Astrocyte of the cerebellum (primary cell): ENCODE measurements at regions of chr12 and their contacts with region 1.

Region 1: DNA sequence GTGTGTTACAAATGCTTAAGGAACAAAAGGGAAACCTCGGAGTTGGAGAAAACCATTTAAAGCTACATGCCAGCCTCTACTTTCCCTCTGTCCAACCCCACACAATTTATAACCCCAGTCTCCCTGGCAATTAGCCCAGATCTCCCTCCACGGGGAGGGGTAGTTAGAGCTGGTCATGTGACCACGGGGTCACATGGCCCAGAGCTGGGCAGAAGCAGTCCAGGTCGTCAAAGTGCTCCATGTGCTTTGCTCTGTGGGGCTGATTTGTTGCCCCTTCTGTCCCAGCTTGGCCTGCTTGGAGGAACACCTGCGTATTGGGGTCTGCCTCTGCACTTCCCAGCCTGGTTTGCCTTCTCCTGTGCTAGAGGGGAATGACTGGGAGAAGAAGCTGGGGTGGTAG is 219.1 kb downstream of the RBM19 start:
- DNase-seq: no peak
- H3K4me3 ChIP-seq: no peak overlapping the region
- CTCF ChIP-seq: no peak

Region 2: DNA sequence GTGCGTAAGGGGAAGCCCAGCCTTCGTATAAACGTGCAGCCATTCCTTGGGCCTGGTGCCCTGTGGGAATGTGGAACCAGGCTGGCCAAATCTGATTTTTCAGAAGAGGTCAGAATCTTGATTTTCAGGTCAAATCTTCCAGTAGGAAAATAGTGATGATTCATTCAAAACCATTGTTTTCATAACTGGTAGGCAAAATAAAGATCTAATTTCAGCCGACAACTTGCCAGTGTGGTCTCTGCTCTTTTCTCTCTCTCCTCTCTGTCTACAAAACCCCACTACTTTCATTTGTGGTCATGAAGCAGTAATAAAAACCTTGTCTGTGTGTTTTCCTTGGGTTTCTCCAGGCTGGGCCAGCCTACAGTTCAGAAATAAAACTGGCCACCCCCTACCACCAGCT is 84.0 kb after region 1 on chr12:
- in situ Hi-C with region 1: loop called (anchors 10 kb)
- DNase-seq: peak; percentile 75
- H3K4me3 ChIP-seq: no peak overlapping the region
- CTCF ChIP-seq: no peak